ENCODE measurements at regions of chrX and their contacts with region 1.

Region 1: GRCh38 chrX:152138388-152138784 is at the start of gene MAGEA10:
- DNase-seq: no peak
- H3K4me3 ChIP-seq: no peak within 1 kb of the TSS
- H3K27ac ChIP-seq: no peak within 1 kb of the TSS
- H3K4me1 ChIP-seq: no peaks in the 10 kb centered on the region
- H3K27me3 ChIP-seq: no peaks in the 10 kb centered on the region
- CTCF ChIP-seq: no peak
- total RNA-seq, gene MAGEA10: not detected

Region 2: GRCh38 chrX:152038798-152039197 is 99.6 kb before region 1 on chrX:
- intact Hi-C with region 1: no loop called
- DNase-seq: no peak
- H3K4me3 ChIP-seq: no peak overlapping the region
- H3K27ac ChIP-seq: no peak overlapping the region
- H3K4me1 ChIP-seq: no peaks in the 10 kb centered on the region
- H3K27me3 ChIP-seq: no peaks in the 10 kb centered on the region
- CTCF ChIP-seq: no peak

Region 3: DNA sequence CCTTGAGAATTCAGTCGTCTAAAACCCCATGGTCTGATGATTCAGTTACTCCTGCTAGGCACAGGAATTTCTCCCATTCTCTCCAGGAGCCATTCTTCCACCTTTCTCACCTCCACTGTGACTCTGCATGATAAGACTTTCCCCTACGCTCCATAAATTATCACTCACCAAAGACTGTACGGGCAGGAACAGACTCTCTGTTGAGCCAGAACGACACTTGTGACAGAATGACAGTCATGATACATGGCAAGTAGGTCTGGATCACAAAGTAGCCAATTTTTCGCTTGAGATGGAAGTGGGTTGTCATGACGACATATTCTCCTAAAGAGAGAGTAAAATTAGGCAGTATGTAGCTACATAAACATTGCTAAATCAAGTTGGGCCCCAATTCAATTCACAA is 59.1 kb after region 1 on chrX:
- intact Hi-C with region 1: loop called (anchors 10 kb)
- DNase-seq: no peak
- H3K4me3 ChIP-seq: no peak overlapping the region
- H3K27ac ChIP-seq: no peak overlapping the region
- H3K4me1 ChIP-seq: no peaks in the 10 kb centered on the region
- H3K27me3 ChIP-seq: no peaks in the 10 kb centered on the region
- CTCF ChIP-seq: no peak

Measured in colonic mucosa (tissue), 4 donors.